ENCODE measurements at regions of chr18 and their contacts with region 1.

Region 1: GRCh38 chr18:28650860-28651259 is 473.9 kb upstream of the CDH2 start:
- DNase-seq: no peak
- H3K4me3 ChIP-seq: no peak overlapping the region
- H3K27ac ChIP-seq: no peak overlapping the region
- H3K4me1 ChIP-seq: no peaks in the 10 kb centered on the region
- H3K27me3 ChIP-seq: no peaks in the 10 kb centered on the region
- CTCF ChIP-seq: no peak
- POLR2A ChIP-seq: no peak

Region 2: GRCh38 chr18:27824841-27825681 is 825.8 kb before region 1 on chr18:
- intact Hi-C with region 1: loop called (anchors 5 kb)
- DNase-seq: no peak
- H3K4me3 ChIP-seq: no peak overlapping the region
- H3K27ac ChIP-seq: no peak overlapping the region
- H3K4me1 ChIP-seq: no peaks in the 10 kb centered on the region
- H3K27me3 ChIP-seq: no peaks in the 10 kb centered on the region
- CTCF ChIP-seq: no peak
- POLR2A ChIP-seq: no peak

Measured in breast epithelium (tissue), 4 donors.